ENCODE measurements at regions of chr9 and their contacts with region 1.

Region 1: GRCh38 chr9:4382722-4383317 is 83.0 kb upstream of the GLIS3 start:
- DNase-seq: no peak
- H3K4me3 ChIP-seq: no peak overlapping the region
- H3K27ac ChIP-seq: no peak overlapping the region
- H3K4me1 ChIP-seq: no peaks in the 10 kb centered on the region
- H3K27me3 ChIP-seq: no peaks in the 10 kb centered on the region
- CTCF ChIP-seq: peak; percentile 59 to 63 (median 62)
- EP300 ChIP-seq: no peak
- POLR2A ChIP-seq: no peak

Region 2: DNA sequence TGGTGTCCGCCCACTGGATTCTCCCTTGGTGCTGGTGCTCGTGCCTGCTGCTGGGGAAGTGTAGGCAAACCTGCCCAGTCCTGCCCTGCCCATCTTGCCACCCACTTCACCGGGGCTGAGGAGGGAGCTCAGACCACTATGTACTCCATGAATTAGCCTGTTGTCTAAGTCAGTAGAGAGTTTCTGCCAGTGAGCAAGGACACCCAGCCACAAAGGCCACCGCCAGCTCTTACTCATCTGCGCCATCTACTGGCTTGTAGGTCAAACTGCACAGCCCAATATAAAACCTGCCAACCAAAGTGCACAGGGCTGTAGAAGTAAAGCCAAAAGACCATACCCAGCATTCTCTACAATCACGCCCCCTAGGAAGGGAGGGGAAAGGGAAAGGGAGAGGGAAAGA is 185.3 kb before region 1 on chr9:
- intact Hi-C with region 1: no loop called
- DNase-seq: peak; percentile 62
- H3K4me3 ChIP-seq: no peak overlapping the region
- H3K27ac ChIP-seq: no peak overlapping the region
- H3K4me1 ChIP-seq: no peaks in the 10 kb centered on the region
- H3K27me3 ChIP-seq: no peaks in the 10 kb centered on the region
- CTCF ChIP-seq: peak; percentile 41 to 63 (median 54)
- EP300 ChIP-seq: no peak
- POLR2A ChIP-seq: no peak

Region 3: DNA sequence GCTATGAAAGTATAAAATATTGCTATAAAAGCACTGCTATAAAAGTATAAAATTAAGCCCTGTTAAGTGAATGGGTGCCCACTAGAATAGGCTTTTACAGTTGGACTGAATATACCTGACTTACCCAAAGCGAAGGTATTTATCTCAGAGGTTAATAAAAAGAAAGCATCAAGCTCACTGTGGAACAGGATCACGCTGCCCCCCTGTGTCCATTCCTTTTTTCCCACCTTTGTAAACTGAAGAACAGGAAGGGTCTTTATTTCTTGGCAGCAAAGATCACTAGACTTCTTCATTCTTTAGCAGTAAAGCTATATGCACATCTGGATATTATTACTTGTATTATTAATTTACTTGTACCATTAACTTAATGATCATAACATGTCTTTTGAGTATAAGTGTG is 257.2 kb after region 1 on chr9:
- intact Hi-C with region 1: loop called (anchors 2 kb)
- DNase-seq: no peak
- H3K4me3 ChIP-seq: no peak overlapping the region
- H3K27ac ChIP-seq: no peak overlapping the region
- H3K4me1 ChIP-seq: peaks cover 0 to 7% (median 6%) of the 10 kb centered on the region in 4 donors
- H3K27me3 ChIP-seq: no peaks in the 10 kb centered on the region
- CTCF ChIP-seq: peak; percentile 56 to 62 (median 61)
- EP300 ChIP-seq: no peak
- POLR2A ChIP-seq: no peak